CD4-positive, alpha-beta memory T cell (primary cell): ENCODE measurements at regions of chr2 and their contacts with region 1.

Region 1: DNA sequence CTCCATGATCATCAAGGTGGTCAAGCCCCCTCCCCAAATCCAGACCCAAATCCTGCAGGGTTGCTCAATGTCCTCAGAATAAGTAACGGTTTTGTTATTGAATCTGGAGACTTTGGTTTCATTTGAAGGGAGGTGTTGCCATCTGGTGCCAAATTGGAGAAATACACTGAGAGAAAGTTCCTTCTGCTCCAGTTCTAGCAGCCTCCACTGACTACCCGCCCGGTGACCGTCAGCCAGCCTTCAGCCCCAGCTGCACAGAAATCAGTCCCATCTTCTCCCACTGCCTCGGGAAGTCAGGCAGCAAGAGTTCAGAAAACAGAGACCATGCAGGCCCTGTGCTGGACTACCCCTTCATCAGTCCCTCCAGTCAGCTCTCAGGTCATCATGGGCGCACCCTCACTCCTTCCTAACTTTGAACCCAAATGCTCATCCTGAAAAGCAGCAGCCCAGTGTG is 38.7 kb downstream of the PKDCC start:
- DNase-seq: peak; percentile 57 to 65 (median 62)
- H3K4me3 ChIP-seq: no peak overlapping the region
- H3K4me3 Mint-ChIP-seq: no peak overlapping the region
- H3K27ac ChIP-seq: no peak overlapping the region
- H3K27ac Mint-ChIP-seq: peak overlapping the region in 1 of 7 donors; percentile 9
- H3K4me1 ChIP-seq: peaks cover 7% of the 10 kb centered on the region
- H3K4me1 Mint-ChIP-seq: peaks cover 6 to 19% (median 10%) of the 10 kb centered on the region in 4 donors
- H3K27me3 ChIP-seq: no peaks in the 10 kb centered on the region
- H3K27me3 Mint-ChIP-seq: peaks cover 0 to 2% of the 10 kb centered on the region in 2 donors

Region 2: DNA sequence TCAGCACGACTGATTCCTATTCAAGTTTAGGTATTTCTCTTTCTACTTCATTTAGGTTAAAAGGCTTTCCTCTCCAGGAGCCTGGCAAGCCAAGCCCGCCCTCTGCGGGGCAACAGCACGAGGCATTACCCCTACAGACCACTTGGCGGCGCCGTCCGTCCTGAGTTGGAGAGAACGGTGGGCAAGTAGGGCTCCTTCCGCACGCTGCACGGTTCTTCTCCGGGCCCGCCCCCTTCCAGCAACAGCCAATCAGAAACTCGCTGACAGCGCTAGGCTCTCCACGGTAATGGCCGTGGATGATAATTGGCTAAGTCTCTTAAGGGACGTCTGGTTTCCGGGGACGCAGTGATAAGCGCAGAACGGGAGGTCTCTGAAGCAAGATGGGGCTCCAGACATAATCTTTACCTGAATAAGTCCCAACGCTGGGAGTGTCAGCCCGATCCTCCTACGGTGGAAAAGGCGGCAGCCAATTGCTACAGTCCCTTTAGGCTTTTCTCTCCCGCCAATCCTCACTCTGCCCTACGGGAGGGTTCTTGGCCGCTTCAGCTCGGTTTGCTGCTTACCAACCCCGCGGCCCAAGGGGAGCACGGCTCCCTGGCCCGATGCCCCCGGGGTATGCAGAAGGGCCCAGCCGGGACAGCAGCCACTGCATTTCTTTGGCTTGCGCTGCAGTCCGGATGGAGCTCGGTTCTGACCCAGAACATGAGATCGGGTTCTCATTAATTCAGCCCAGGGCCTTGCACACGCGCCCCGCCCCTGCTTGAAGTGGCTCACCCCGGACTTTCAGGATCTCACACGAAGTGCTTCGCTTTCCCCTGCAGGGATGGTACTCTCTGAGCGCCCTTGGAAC is 245.6 kb before region 1 on chr2:
- CTCF ChIA-PET with region 1: interaction called, 37 read pairs
- POLR2A ChIA-PET with region 1: interaction called, 9 read pairs
- intact Hi-C with region 1: loop called (anchors 1 kb)
- DNase-seq: peak; percentile 97 to 98 (median 97)
- H3K4me3 ChIP-seq: peak overlapping the region; percentile 85 to 86
- H3K4me3 Mint-ChIP-seq: peak overlapping the region; percentile 90 to 100 (median 96)
- H3K27ac ChIP-seq: peak overlapping the region; percentile 75
- H3K27ac Mint-ChIP-seq: peak overlapping the region; percentile 85 to 98 (median 94)
- H3K4me1 ChIP-seq: peaks cover 10% of the 10 kb centered on the region
- H3K4me1 Mint-ChIP-seq: peaks cover 5 to 16% (median 11%) of the 10 kb centered on the region in 4 donors
- H3K27me3 ChIP-seq: peaks cover 3% of the 10 kb centered on the region
- H3K27me3 Mint-ChIP-seq: peaks cover 11 to 16% of the 10 kb centered on the region in 2 donors

Region 3: DNA sequence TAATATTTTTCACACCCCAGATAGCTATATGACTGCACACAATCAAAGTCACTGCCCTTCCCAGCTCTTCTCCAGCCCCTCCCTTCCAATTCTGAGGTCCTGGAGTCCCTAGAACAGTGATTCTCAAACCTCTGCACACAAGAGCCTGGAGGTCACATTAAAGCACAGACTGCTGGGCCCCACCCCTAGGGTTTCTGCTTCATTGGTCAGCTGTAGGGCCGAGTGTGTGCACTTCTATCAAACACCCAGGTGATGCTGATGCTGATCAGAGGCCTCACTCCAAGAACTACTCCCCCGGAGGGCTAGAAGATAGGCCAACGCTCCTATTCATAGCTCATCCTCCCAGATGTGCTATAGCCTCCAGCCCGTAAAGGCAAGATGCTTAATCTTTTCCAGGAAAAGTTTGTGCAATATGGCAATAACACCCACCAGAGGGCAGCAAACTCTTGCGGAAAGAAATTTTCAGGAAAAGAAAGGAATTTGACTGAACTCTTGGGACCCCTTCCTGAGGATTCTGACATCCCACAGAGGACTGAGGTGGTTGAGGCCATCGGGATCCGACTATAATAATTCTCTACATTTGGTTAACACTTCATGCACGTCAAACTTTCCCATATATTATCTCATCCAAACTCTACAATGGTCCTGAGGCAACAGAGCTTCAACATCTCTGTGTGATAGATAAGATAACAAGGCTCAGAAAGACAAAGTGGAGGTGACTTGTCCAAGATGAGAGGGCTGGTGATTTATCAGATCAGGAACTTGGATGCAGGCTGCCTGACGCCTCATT is 232.9 kb before region 1 on chr2:
- CTCF ChIA-PET with region 1: interaction called, 102 read pairs
- POLR2A ChIA-PET with region 1: no interaction called
- intact Hi-C with region 1: loop called (anchors 1 kb)
- DNase-seq: peak in 1 of 5 donors; percentile 14
- H3K4me3 ChIP-seq: no peak overlapping the region
- H3K4me3 Mint-ChIP-seq: no peak overlapping the region
- H3K27ac ChIP-seq: no peak overlapping the region
- H3K27ac Mint-ChIP-seq: no peak overlapping the region
- H3K4me1 ChIP-seq: peaks cover 4% of the 10 kb centered on the region
- H3K4me1 Mint-ChIP-seq: no peaks in the 10 kb centered on the region
- H3K27me3 ChIP-seq: no peaks in the 10 kb centered on the region
- H3K27me3 Mint-ChIP-seq: peaks cover 18 to 21% of the 10 kb centered on the region in 2 donors

Region 4: DNA sequence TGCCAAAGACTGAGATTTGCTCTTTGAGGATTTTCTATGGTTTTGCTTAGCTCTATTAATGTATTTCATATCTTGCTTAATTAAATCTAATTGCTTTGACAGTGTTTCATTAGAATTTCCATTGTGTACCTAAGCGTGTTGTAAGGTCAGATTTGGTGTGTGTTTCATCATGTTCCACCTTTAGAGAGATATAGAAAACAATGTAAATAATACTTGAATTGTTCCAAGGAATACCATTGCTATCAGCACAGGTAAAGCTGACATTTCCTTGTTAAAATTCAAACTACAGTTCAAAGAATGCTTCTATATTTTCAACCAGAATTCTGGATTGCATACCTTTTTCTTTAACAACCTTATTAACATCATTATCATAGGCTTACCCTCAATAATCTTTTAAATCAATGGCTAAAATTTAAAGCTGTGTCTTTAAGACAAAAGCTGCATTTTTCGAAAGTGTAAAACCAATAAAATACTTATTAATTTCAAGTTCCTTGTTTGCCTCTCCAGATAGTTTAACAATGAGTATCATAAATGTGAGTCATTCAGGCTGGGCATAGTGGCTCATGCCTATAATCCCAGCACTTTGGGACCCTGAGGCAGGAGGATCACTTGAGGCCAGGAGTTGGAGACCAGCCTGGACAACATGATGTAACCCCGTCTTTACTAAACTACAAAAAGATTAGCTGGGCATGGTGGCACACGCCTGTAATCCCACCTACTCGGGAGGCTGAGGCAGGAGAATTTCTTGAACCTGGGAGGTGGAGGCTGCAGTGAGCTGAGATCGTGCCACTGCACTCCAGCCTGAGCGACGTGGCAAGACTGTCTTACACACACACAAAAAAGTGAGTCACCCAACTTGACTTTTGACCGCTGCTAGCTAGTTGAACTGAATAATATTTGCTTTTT is 226.7 kb before region 1 on chr2:
- CTCF ChIA-PET with region 1: interaction called, 102 read pairs
- POLR2A ChIA-PET with region 1: no interaction called
- intact Hi-C with region 1: no loop called
- DNase-seq: no peak
- H3K4me3 ChIP-seq: no peak overlapping the region
- H3K4me3 Mint-ChIP-seq: no peak overlapping the region
- H3K27ac ChIP-seq: no peak overlapping the region
- H3K27ac Mint-ChIP-seq: no peak overlapping the region
- H3K4me1 ChIP-seq: no peaks in the 10 kb centered on the region
- H3K4me1 Mint-ChIP-seq: peaks cover 0 to 3% (median 0%) of the 10 kb centered on the region in 4 donors
- H3K27me3 ChIP-seq: no peaks in the 10 kb centered on the region
- H3K27me3 Mint-ChIP-seq: peaks cover 11 to 17% of the 10 kb centered on the region in 2 donors

Region 5: GRCh38 chr2:42238644-42239288 is 152.2 kb after region 1 on chr2:
- CTCF ChIA-PET with region 1: interaction called, 12 read pairs
- POLR2A ChIA-PET with region 1: no interaction called
- intact Hi-C with region 1: no loop called
- DNase-seq: peak; percentile 40 to 51 (median 48)
- H3K4me3 ChIP-seq: no peak overlapping the region
- H3K4me3 Mint-ChIP-seq: peak overlapping the region in 5 of 8 donors; percentile 20 to 51 (median 39)
- H3K27ac ChIP-seq: no peak overlapping the region
- H3K27ac Mint-ChIP-seq: peak overlapping the region in 6 of 7 donors; percentile 43 to 80 (median 64)
- H3K4me1 ChIP-seq: peaks cover 99% of the 10 kb centered on the region
- H3K4me1 Mint-ChIP-seq: peaks cover 64 to 92% (median 81%) of the 10 kb centered on the region in 4 donors
- H3K27me3 ChIP-seq: no peaks in the 10 kb centered on the region
- H3K27me3 Mint-ChIP-seq: no peaks in the 10 kb centered on the region

Region 6: GRCh38 chr2:42547014-42547413 is 460.5 kb after region 1 on chr2:
- CTCF ChIA-PET with region 1: no interaction called
- POLR2A ChIA-PET with region 1: no interaction called
- intact Hi-C with region 1: no loop called
- DNase-seq: no peak
- H3K4me3 ChIP-seq: no peak overlapping the region
- H3K4me3 Mint-ChIP-seq: no peak overlapping the region
- H3K27ac ChIP-seq: no peak overlapping the region
- H3K27ac Mint-ChIP-seq: no peak overlapping the region
- H3K4me1 ChIP-seq: no peaks in the 10 kb centered on the region
- H3K4me1 Mint-ChIP-seq: no peaks in the 10 kb centered on the region
- H3K27me3 ChIP-seq: no peaks in the 10 kb centered on the region
- H3K27me3 Mint-ChIP-seq: no peaks in the 10 kb centered on the region